Sigmoid colon (tissue), 7 donors: ENCODE measurements at regions of chr1 and their contacts with region 1.

Region 1: GRCh38 chr1:48817505-48818114 is 40.9 kb upstream of the BEND5 start:
- DNase-seq: peak; percentile 71
- H3K4me3 ChIP-seq: no peak overlapping the region
- H3K27ac ChIP-seq: no peak overlapping the region
- H3K4me1 ChIP-seq: no peaks in the 10 kb centered on the region
- H3K27me3 ChIP-seq: no peaks in the 10 kb centered on the region
- CTCF ChIP-seq: peak; percentile 36 to 79 (median 66)
- EP300 ChIP-seq: no peak
- POLR2A ChIP-seq: no peak

Region 2: GRCh38 chr1:48571303-48571987 is 246.2 kb before region 1 on chr1:
- intact Hi-C with region 1: loop called (anchors 2 kb)
- DNase-seq: no peak
- H3K4me3 ChIP-seq: no peak overlapping the region
- H3K27ac ChIP-seq: peak overlapping the region in 1 of 4 donors; percentile 49
- H3K4me1 ChIP-seq: peaks cover 0 to 23% (median 15%) of the 10 kb centered on the region in 4 donors
- H3K27me3 ChIP-seq: no peaks in the 10 kb centered on the region
- CTCF ChIP-seq: no peak
- EP300 ChIP-seq: no peak
- POLR2A ChIP-seq: no peak

Region 3: GRCh38 chr1:48677306-48678287 is 140.0 kb before region 1 on chr1:
- intact Hi-C with region 1: loop called (anchors 2 kb)
- DNase-seq: peak; percentile 79
- H3K4me3 ChIP-seq: no peak overlapping the region
- H3K27ac ChIP-seq: no peak overlapping the region
- H3K4me1 ChIP-seq: peaks cover 0 to 5% (median 0%) of the 10 kb centered on the region in 4 donors
- H3K27me3 ChIP-seq: no peaks in the 10 kb centered on the region
- CTCF ChIP-seq: peak; percentile 15 to 55 (median 35)
- EP300 ChIP-seq: no peak
- POLR2A ChIP-seq: no peak

Region 4: DNA sequence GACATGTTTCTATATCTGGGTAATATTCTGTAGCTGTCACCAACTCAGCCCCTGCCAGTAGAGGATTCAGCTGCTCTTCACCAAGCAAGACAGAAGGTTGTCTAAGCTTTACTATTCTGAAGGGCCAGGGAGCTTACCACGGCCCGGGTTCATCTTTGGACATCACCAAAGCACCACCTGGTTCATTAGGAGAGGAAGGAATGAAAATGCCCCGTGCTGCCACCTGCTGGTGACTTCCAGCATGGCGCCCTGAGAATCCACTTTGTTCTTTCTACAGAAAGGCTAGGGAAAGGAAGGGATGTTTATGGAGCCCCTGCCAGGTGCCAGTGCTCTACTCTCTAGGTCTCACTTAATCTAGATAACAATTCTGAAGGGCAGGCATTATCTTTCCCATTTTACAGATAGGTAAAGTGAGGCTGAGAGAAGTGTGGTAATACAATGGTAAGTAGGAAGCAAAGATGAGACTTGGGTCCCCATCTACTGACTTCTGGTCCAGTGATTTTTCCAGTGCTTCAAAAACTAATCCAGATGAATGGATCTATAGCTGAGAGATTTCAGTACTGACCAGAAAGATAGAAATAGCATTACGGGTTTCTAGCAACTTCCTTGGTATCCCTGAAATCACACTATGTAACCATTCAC is 120.4 kb before region 1 on chr1:
- intact Hi-C with region 1: loop called (anchors 5 kb)
- DNase-seq: no peak
- H3K4me3 ChIP-seq: no peak overlapping the region
- H3K27ac ChIP-seq: no peak overlapping the region
- H3K4me1 ChIP-seq: peaks cover 0 to 4% (median 2%) of the 10 kb centered on the region in 4 donors
- H3K27me3 ChIP-seq: no peaks in the 10 kb centered on the region
- CTCF ChIP-seq: peak in 3 of 4 experiments; percentile 61 to 92 (median 77)
- EP300 ChIP-seq: no peak
- POLR2A ChIP-seq: no peak